RWPE1 (cell line): ENCODE measurements at regions of chr1 and their contacts with region 1.

Region 1: DNA sequence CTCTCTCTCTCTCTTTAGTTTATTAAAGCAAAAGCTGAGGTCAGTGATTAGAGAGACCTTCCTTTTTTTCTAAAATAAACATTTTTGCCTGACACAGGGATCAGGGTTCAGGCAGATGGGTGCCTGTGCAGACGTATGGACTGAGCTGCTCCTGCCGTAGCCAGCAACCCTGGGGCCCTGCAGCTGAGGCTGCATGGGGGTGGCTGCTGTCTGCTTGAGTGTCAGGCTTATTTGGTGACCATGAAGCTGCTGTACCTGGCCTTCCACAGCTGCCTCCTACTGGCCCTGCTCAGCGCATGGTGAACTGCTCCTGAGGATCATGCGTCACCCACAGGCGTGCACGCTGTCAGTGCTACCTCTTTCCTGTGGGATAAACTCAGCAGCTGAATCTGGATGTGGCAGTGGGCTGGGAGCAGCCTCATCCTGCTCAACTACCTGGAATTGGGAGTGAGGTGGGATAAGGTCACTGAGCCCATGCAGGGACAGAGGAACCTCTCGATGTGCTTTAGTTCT is 35.1 kb downstream of the GNG4 start:
- DNase-seq: no peak
- H3K27ac ChIP-seq: no peak overlapping the region
- CTCF ChIP-seq: no peak

Region 2: DNA sequence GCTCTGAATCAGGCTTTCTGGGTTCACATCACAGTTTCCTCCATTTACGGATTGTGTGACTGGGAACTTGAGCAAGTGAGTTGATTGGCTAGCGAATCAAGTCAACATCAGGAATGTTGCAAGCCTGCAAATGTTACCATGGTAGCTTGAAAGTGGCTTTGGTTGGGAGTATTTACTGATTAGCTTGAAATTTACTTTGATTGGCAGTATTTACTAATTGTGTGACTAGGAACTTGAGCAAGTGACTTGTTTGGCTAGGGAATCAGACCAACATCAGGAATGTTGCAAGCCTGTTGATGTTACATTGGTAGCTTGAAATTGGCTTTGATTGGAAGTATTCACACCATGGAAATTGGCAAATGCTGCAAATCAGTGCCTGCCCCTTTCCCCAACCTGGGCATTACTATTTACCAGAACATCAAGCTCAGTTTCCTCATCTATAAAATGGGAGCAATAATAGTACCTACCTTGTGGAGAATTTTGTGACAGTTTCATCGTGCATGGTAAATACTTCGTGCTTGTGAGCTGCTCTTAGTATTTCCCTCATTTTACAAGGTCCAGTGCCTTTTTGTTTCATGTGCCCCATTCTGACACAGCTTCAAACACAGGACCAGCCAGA is 87.2 kb before region 1 on chr1:
- CTCF ChIA-PET with region 1: no interaction called
- POLR2A ChIA-PET with region 1: no interaction called
- DNase-seq: no peak
- H3K27ac ChIP-seq: no peak overlapping the region
- CTCF ChIP-seq: no peak

Region 3: DNA sequence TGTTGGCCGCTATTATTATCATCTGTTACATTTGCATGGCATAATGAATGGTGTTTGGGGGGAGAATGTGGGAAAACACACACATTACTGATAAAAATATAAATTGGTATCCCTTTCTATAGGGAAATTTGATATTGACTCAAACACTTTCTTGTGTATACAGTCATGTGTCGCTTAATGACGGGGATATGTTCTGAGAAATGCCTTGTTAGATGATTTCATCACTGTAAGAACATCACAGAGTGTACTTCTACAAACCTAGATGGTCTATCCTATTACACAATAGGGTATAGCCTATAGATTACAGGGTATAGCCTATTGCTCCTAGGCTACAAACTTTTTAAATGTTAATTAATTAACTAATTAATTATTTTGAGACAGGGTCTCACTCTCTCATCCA is 43.0 kb before region 1 on chr1:
- CTCF ChIA-PET with region 1: no interaction called
- POLR2A ChIA-PET with region 1: no interaction called
- DNase-seq: no peak
- H3K27ac ChIP-seq: no peak overlapping the region
- CTCF ChIP-seq: no peak

Region 4: DNA sequence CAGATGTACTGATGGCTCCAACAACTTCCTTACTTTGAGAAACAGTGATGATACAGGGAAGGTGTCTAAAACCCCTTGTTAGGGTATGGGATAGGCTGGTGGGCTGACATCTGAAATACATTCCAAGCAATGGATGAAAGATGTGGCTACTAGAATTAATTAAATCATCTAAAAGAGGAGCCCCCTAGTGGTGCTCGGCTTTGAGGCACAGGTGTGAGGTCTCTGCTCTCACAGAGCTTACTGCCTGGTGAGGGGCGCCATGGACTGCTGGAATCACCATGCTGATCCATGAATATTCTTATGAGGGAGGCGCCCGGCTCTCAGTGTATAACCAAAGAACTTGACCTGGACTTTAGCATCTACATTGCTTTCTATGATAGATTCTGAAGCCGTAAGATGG is 13.4 kb before region 1 on chr1:
- CTCF ChIA-PET with region 1: interaction called, 13 read pairs
- POLR2A ChIA-PET with region 1: interaction called, 3 read pairs
- DNase-seq: peak; percentile 10
- H3K27ac ChIP-seq: no peak overlapping the region
- CTCF ChIP-seq: no peak; the same call in 1 of the 2 replicates

Region 5: DNA sequence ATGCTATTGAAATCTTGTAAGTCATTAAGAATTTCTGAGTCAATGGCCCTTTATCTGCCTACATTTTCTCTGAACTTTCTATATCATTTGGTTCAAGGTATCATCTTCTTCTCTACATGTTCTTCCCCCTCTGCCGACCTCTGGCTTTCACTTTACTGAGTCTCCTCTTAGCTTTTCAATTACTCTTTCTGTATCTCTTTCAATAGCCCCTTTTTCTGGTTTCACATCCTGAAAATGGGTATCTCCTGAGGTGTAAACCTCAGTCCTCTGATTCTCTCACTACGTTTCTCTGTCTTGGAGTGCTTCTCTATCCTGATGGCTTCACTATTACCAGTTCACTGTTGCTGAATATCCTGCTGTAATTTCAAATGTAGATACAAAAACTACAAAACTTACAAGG is 153.3 kb after region 1 on chr1:
- CTCF ChIA-PET with region 1: no interaction called
- POLR2A ChIA-PET with region 1: no interaction called
- DNase-seq: no peak
- H3K27ac ChIP-seq: no peak overlapping the region
- CTCF ChIP-seq: no peak